Common myeloid progenitor, CD34-positive (primary cell): ENCODE measurements at regions of chr13 and their contacts with region 1.

Region 1: GRCh38 chr13:20495082-20496023 is 30.3 kb downstream of the CRYL1 start:
- DNase-seq: peak; percentile 81 to 92 (median 90)
- H3K4me3 ChIP-seq: peak overlapping the region in 5 of 7 experiments; percentile 29 to 65 (median 59)
- H3K27ac ChIP-seq: peak overlapping the region; percentile 72 to 87
- H3K4me1 ChIP-seq: peaks cover 0 to 21% (median 16%) of the 10 kb centered on the region in 4 experiments
- H3K27me3 ChIP-seq: no peaks in the 10 kb centered on the region

Region 2: GRCh38 chr13:20136781-20137703 is 358.3 kb before region 1 on chr13:
- CTCF ChIA-PET with region 1: no interaction called
- POLR2A ChIA-PET with region 1: no interaction called
- DNase-seq: peak; percentile 40 to 66 (median 61)
- H3K4me3 ChIP-seq: peak overlapping the region in 3 of 7 experiments; percentile 19 to 58 (median 57)
- H3K27ac ChIP-seq: no peak overlapping the region
- H3K4me1 ChIP-seq: peaks cover 0 to 9% (median 5%) of the 10 kb centered on the region in 4 experiments
- H3K27me3 ChIP-seq: peaks cover 9 to 59% (median 28%) of the 10 kb centered on the region in 5 experiments

Region 3: DNA sequence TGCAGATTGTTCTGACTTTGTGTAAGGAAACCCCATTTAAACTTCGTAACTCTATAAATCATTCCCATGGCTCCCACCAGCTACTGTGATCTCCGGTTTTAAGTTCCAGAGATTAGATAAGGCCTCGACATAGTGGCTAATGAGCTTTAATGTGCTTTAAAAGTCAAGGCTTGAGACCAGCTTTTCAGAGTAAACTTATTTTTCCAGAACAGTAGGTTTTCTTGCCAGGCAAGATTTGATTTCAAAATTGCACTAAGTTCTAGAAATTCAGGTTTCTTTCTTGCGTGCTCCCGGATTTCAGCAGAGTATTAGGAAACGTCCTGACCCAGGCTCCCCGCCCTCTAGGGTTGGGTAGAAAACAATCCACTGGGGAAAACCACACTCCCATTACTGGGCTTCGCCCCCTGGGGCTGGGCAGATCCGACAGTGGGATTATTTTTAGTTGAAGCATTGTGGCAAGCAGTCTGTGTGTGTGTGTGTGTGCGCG is 13.0 kb before region 1 on chr13:
- CTCF ChIA-PET with region 1: interaction called, 26 read pairs
- POLR2A ChIA-PET with region 1: interaction called, 3 read pairs
- DNase-seq: no peak
- H3K4me3 ChIP-seq: no peak overlapping the region
- H3K27ac ChIP-seq: no peak overlapping the region
- H3K4me1 ChIP-seq: no peaks in the 10 kb centered on the region
- H3K27me3 ChIP-seq: no peaks in the 10 kb centered on the region

Region 4: GRCh38 chr13:20553311-20553710 is 58.0 kb after region 1 on chr13:
- CTCF ChIA-PET with region 1: interaction called, 96 read pairs
- POLR2A ChIA-PET with region 1: no interaction called
- DNase-seq: no peak
- H3K4me3 ChIP-seq: no peak overlapping the region
- H3K27ac ChIP-seq: no peak overlapping the region
- H3K4me1 ChIP-seq: peaks cover 0 to 4% (median 0%) of the 10 kb centered on the region in 4 experiments
- H3K27me3 ChIP-seq: no peaks in the 10 kb centered on the region